Endothelial cell of umbilical vein (primary cell): ENCODE measurements at regions of chr20 and their contacts with region 1.

Region 1: DNA sequence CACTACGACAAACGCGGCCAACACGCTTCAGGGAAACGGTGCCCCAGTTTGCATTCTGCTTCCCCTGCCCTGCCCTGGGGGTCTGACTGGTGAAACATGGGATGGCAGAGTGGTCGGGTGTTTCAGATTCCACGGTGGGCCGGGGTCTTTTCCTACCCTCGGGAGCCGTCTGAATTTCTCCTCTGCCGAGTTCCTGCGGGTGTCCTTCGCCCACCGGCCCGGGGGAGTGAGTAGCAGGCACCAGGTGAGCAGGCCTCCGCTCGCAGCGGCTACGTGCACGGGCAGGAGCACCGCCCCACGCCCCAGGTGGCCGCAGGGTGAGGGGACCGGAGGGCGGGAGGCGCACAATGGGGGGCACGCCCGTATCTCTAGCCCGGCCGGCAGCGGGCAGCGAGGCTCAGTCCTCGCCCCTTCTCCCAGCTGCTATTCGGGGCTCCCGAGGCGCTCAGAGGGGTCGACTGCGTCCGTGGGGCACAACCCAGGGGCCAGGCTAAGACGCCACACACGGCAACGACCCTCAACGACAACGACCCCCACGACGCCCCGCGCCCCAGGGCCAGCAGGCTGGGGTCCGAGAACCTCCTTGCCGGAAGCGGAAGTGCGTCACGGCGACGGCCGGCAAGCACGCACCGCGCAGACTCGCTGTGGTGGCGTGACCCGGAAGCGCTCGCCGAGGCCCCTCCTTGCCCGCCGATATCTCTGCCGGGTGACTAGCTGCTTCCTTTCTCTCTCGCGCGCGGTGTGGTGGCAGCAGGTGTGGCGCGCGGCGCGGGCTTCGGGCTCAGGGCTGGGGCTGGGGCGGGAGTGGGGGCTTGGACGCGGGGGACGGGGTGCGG is at the start of gene RPS21:
- DNase-seq: peak; percentile 92
- H3K4me3 ChIP-seq: peak within 1 kb of the TSS; percentile 72 to 82 (median 81)
- H3K27ac ChIP-seq: peak within 1 kb of the TSS; percentile 91
- H3K4me1 ChIP-seq: peaks cover 17% of the 10 kb centered on the region
- H3K27me3 ChIP-seq: no peaks in the 10 kb centered on the region
- CTCF ChIP-seq: no peak
- POLR2A ChIP-seq: peak; percentile 90
- total RNA-seq, gene RPS21: 1,627 and 1,644 TPM in 2 replicates

Region 2: GRCh38 chr20:62182613-62183425 is 203.8 kb before region 1 on chr20 and contains the start of gene MTG2:
- CTCF ChIA-PET with region 1: no interaction called
- POLR2A ChIA-PET with region 1: no interaction called
- dilution Hi-C with region 1: no loop called
- intact Hi-C with region 1: loop called (anchors 10 kb)
- DNase-seq: peak; percentile 93
- H3K4me3 ChIP-seq: peak within 1 kb of the TSS; percentile 87 to 98 (median 93)
- H3K27ac ChIP-seq: peak within 1 kb of the TSS; percentile 92
- H3K4me1 ChIP-seq: peaks cover 22% of the 10 kb centered on the region
- H3K27me3 ChIP-seq: no peaks in the 10 kb centered on the region
- CTCF ChIP-seq: no peak
- POLR2A ChIP-seq: peak; percentile 90
- total RNA-seq, gene MTG2: 22.1 and 31.6 TPM in 2 replicates

Region 3: DNA sequence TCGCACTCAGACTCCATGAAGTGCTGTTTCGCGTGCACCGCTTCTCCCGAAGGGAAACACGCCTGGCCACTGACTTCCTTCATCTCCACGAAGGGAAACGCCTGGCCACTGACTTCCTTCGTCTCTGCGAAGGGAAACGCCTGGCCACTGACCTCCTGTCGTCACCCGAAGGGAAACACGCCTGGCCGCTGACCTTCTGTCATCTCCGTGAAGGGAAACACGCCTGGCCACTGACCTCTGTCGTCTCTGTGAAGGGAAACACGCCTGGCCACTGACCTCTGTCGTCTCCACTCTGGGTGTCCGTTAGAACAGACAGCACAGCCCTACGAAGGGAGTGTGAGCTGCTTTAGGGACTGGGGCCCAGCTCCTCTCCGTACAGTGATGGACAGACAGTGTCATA is 100.9 kb before region 1 on chr20:
- CTCF ChIA-PET with region 1: interaction called, 10 read pairs
- POLR2A ChIA-PET with region 1: interaction called, 3 read pairs
- dilution Hi-C with region 1: no loop called
- intact Hi-C with region 1: no loop called
- DNase-seq: peak; percentile 98
- H3K4me3 ChIP-seq: no peak overlapping the region
- H3K27ac ChIP-seq: peak overlapping the region; percentile 91
- H3K4me1 ChIP-seq: peaks cover 19% of the 10 kb centered on the region
- H3K27me3 ChIP-seq: no peaks in the 10 kb centered on the region
- CTCF ChIP-seq: no peak
- POLR2A ChIP-seq: peak; percentile 89

Region 4: GRCh38 chr20:62339647-62340070 is 46.9 kb before region 1 on chr20:
- CTCF ChIA-PET with region 1: interaction called, 8 read pairs
- POLR2A ChIA-PET with region 1: no interaction called
- dilution Hi-C with region 1: no loop called
- intact Hi-C with region 1: loop called (anchors 5 kb)
- DNase-seq: no peak
- H3K4me3 ChIP-seq: no peak overlapping the region
- H3K27ac ChIP-seq: no peak overlapping the region
- H3K4me1 ChIP-seq: no peaks in the 10 kb centered on the region
- H3K27me3 ChIP-seq: no peaks in the 10 kb centered on the region
- CTCF ChIP-seq: no peak
- POLR2A ChIP-seq: no peak

Region 5: GRCh38 chr20:62357187-62357667 is 29.4 kb before region 1 on chr20:
- CTCF ChIA-PET with region 1: interaction called, 179 read pairs
- POLR2A ChIA-PET with region 1: interaction called, 8 read pairs
- dilution Hi-C with region 1: no loop called
- intact Hi-C with region 1: loop called (anchors 1 kb)
- DNase-seq: peak; percentile 84
- H3K4me3 ChIP-seq: no peak overlapping the region
- H3K27ac ChIP-seq: peak overlapping the region; percentile 89
- H3K4me1 ChIP-seq: peaks cover 52% of the 10 kb centered on the region
- H3K27me3 ChIP-seq: no peaks in the 10 kb centered on the region
- CTCF ChIP-seq: no peak
- POLR2A ChIP-seq: peak; percentile 49

Region 6: DNA sequence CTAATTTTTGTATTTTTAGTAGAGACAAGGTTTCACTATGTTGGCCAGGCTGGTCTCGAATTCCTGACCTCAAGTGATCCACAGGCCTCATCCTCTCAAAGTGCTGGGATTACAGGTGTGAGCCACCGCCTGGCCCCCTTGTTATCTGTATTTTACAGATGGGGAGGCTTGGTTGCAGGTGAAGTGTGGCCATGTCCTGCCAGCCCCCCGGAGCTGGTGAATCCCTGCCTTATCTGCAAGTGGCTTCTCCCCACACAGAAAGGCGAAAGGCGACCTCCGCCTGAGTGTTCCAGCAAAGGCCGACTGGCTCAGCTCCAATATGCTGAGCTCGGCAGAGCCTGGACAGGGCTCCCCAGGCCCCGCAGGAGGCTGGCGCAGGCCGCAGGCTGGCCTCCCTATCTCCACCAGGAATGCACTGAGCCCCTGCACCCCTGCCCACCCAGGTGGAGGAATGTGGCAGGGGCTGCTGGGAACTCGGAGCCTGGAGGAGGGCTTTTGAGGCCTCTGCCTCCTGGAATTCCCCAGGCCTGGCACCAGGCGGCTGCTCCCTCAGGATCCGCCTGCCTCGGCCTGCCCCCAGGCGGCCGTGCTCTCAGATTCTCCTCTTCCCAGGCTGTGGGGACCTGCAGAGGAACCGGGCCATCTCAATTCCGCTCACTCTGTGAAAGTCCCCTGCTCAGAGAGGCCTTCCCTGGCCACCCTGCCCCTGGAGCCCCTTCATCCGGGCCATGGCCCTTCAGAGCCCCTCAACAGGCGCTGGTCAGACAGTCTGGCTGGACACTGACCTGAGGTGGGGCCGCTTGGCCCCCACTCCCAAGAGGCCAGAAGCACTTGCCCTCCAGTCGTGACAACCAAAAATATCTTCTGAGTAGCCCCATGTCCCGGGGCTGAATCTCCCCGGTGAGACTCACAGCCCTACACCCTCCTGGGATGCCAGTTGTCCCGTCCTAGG is 10.2 kb before region 1 on chr20:
- CTCF ChIA-PET with region 1: interaction called, 179 read pairs
- POLR2A ChIA-PET with region 1: no interaction called
- dilution Hi-C with region 1: no loop called
- intact Hi-C with region 1: no loop called
- DNase-seq: no peak
- H3K4me3 ChIP-seq: no peak overlapping the region
- H3K27ac ChIP-seq: no peak overlapping the region
- H3K4me1 ChIP-seq: peaks cover 11% of the 10 kb centered on the region
- H3K27me3 ChIP-seq: no peaks in the 10 kb centered on the region
- CTCF ChIP-seq: peak; percentile 27 to 57
- POLR2A ChIP-seq: no peak